ENCODE measurements at regions of chr9 and their contacts with region 1.

Region 1: DNA sequence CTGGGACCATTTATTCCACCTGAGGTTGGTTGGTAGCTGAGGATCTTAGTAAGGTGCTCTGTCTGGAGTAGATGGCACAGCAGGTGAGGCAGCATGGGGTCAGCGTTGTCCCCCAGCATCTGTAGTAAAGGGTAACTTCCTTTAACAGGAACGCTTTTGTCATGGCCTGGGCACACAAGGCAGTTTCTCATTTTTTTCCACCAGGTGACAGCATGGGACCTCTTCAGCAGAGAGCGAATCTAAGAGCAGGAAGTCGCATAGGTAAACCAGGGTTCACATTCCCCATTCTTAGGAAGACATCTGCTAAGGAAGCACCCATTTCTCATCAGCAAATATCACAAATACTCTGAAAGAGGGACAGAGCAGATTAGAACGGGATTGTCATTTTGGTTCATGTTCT is 56.5 kb downstream of the GPR107 start:
- DNase-seq: no peak
- H3K4me3 ChIP-seq: no peak overlapping the region
- CTCF ChIP-seq: peak; percentile 29

Region 2: GRCh38 chr9:130186839-130187522 is 76.8 kb after region 1 on chr9:
- in situ Hi-C with region 1: loop called (anchors 5 kb)
- DNase-seq: no peak
- H3K4me3 ChIP-seq: no peak overlapping the region
- CTCF ChIP-seq: no peak

Measured in astrocyte of the cerebellum (primary cell).